ENCODE measurements at regions of chr21 and their contacts with region 1.

Region 1: DNA sequence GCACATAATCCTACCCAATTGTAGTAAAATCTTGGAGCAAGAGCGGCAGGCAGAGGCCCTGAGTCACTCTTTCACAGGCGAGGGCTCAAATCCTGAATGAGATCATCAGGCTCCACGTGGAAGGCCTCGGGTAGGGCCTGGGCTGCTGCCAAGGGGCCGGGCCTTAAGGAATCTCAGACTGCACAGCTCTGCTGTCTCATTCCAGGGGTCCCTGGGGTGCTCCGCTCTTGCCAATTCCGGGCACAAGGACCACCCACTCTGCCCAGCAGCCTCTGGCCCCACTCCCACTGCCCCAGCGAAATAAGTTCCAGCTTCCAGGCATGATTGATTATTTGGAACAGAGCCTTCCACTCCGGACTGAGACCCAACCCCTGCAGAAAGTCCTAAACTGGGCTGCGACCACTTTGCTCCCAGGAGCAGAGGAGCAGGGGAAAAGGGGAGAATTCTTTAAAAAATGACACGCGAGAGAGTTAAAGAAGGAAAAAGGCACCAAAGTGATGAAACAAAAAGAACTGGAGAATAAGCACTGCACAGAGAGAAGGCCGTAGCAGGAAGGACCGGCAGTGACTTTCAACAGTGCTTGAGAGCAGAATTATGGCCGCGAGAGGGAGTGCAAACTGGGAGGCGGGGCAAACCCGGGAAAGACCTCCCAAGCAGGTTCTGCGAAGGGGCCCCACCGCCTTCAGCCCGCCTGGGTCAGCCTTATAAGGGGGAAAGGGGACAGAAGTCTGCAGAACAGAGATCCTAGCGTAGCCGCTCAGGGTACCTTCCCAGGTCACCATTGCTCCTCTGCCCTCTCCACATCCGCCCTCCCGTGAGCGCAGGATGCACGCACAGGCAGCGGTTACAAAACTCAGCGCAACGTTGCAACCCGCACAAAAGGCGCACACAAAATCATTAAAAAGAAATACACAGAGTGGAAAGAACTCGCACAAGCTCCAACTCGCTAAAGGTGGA is 2.0 kb downstream of the ADAMTS1 start:
- H3K4me3 ChIP-seq: peak overlapping the region; percentile 90
- H3K27ac ChIP-seq: peak overlapping the region; percentile 99
- H3K4me1 ChIP-seq: peaks cover 7% of the 10 kb centered on the region; the same call in 1 of the 2 replicates
- CTCF ChIP-seq: peak; percentile 85

Region 2: GRCh38 chr21:26659182-26659581 is 184.1 kb before region 1 on chr21:
- CTCF ChIA-PET with region 1: no interaction called
- POLR2A ChIA-PET with region 1: no interaction called
- H3K4me3 ChIP-seq: no peak overlapping the region
- H3K27ac ChIP-seq: no peak overlapping the region
- H3K4me1 ChIP-seq: no peaks in the 10 kb centered on the region
- CTCF ChIP-seq: no peak

Region 3: GRCh38 chr21:26732432-26733221 is 110.6 kb before region 1 on chr21:
- CTCF ChIA-PET with region 1: no interaction called
- POLR2A ChIA-PET with region 1: interaction called, 11 read pairs
- H3K4me3 ChIP-seq: no peak overlapping the region
- H3K27ac ChIP-seq: no peak overlapping the region
- H3K4me1 ChIP-seq: no peaks in the 10 kb centered on the region
- CTCF ChIP-seq: peak; percentile 30; the same call in 1 of the 2 replicates

Region 4: DNA sequence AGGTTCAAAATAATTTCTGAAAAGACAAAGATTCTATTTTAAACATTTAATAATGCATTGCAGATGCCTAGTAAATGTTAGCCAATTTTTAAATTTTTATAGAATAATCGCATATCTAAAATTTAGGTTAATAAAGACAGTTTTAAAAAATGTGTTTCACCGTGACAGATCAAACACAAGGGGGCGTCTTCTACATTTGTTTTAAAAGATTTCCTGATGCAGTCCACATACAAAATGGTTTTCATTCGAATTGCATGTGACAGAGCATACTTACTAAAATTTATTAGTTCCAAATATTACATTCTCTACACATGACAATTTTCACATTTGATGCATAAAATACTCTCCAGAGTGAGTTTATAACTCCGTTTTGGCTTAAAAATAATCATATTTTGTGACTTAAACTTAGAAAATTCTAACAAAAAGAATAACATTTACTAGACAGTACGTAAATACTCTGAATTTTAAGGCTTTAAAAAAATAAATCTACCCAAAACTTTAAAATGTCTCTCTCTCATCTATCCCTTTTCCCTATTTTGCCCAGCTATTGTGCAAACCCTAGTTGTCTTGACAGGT is 73.6 kb before region 1 on chr21:
- CTCF ChIA-PET with region 1: interaction called, 11 read pairs
- POLR2A ChIA-PET with region 1: interaction called, 14 read pairs
- H3K4me3 ChIP-seq: no peak overlapping the region
- H3K27ac ChIP-seq: no peak overlapping the region
- H3K4me1 ChIP-seq: no peaks in the 10 kb centered on the region
- CTCF ChIP-seq: no peak

Region 5: DNA sequence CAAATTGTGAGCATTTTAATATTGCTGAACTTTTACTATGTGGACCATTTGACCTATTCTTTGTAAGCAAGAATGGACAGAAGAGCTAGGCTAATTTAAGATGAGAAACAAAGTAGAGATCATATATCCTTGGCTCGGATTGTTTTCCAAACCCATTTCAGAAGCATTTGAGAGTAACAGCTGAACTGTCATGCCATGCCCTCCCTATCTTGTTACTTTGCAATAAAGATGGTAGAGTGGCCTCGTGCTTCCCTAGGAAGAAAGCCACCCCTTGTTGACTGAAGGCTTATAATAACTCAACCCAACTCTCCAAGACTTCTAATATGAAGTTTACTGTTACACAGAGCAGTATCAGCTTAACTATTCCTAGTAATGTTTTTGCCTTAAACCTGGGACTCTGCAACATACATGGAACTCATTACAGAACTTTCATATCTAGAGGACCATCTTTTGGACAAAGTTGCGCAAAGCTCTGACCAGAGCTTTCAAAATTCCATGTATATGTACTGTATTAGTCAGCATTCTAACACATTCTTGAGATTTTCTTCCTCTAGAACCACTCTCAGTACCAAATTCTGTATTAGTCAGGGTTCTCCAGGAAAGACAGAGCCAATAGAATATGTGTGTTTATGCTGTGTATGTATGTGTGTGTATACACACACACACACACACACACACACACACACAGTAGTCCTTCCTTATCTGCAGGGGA is 66.8 kb before region 1 on chr21:
- CTCF ChIA-PET with region 1: interaction called, 10 read pairs
- POLR2A ChIA-PET with region 1: interaction called, 5 read pairs
- H3K4me3 ChIP-seq: no peak overlapping the region
- H3K27ac ChIP-seq: no peak overlapping the region
- H3K4me1 ChIP-seq: no peaks in the 10 kb centered on the region
- CTCF ChIP-seq: no peak

Region 6: GRCh38 chr21:26795866-26796329 is 47.4 kb before region 1 on chr21:
- CTCF ChIA-PET with region 1: no interaction called
- POLR2A ChIA-PET with region 1: interaction called, 23 read pairs
- H3K4me3 ChIP-seq: no peak overlapping the region
- H3K27ac ChIP-seq: peak overlapping the region; percentile 68
- H3K4me1 ChIP-seq: peaks cover 24% of the 10 kb centered on the region
- CTCF ChIP-seq: no peak

Region 7: GRCh38 chr21:26814374-26814773 is 28.9 kb before region 1 on chr21:
- CTCF ChIA-PET with region 1: interaction called, 20 read pairs
- POLR2A ChIA-PET with region 1: interaction called, 34 read pairs
- H3K4me3 ChIP-seq: no peak overlapping the region
- H3K27ac ChIP-seq: no peak overlapping the region
- H3K4me1 ChIP-seq: no peaks in the 10 kb centered on the region
- CTCF ChIP-seq: no peak

Region 8: GRCh38 chr21:26819740-26820363 is 23.4 kb before region 1 on chr21:
- CTCF ChIA-PET with region 1: interaction called, 20 read pairs
- POLR2A ChIA-PET with region 1: interaction called, 34 read pairs
- H3K4me3 ChIP-seq: no peak overlapping the region
- H3K27ac ChIP-seq: no peak overlapping the region
- H3K4me1 ChIP-seq: no peaks in the 10 kb centered on the region
- CTCF ChIP-seq: no peak

Region 9: DNA sequence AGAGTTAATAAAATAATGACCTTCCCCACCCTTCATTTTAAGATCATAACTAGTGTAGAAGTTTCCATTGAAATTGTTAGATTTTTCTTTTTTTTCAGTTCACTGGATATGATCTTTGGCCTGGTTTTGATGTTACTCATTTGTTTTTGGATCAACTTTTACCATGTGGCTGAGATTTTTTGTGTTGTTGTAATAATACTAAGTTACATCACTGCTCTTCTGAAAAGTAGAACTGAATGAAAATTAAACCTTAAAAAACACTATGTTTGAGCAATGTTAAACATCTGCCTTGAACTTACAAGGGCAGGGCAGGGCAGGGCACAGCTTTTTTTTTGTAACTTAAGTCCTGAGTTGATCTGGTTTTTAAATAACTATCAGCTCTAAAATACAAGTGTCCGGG is 328.5 kb after region 1 on chr21:
- CTCF ChIA-PET with region 1: no interaction called
- POLR2A ChIA-PET with region 1: no interaction called
- H3K4me3 ChIP-seq: no peak overlapping the region
- H3K27ac ChIP-seq: no peak overlapping the region
- H3K4me1 ChIP-seq: 0 out of 2 replicates have a peak, but pooled peaks cover 3% of the 10 kb centered on the region
- CTCF ChIP-seq: no peak

Measured in HEK293 (cell line).